ENCODE measurements at regions of chr2 and their contacts with region 1.

Region 1: GRCh38 chr2:223815186-223815883 is 22.0 kb downstream of the AP1S3 start:
- DNase-seq: peak; percentile 14
- ATAC-seq: peak; percentile 88
- H3K4me3 Mint-ChIP-seq: no peak overlapping the region
- H3K27ac Mint-ChIP-seq: peak overlapping the region; percentile 5
- H3K4me1 Mint-ChIP-seq: peaks cover 18% of the 10 kb centered on the region
- H3K27me3 Mint-ChIP-seq: no peaks in the 10 kb centered on the region

Region 2: DNA sequence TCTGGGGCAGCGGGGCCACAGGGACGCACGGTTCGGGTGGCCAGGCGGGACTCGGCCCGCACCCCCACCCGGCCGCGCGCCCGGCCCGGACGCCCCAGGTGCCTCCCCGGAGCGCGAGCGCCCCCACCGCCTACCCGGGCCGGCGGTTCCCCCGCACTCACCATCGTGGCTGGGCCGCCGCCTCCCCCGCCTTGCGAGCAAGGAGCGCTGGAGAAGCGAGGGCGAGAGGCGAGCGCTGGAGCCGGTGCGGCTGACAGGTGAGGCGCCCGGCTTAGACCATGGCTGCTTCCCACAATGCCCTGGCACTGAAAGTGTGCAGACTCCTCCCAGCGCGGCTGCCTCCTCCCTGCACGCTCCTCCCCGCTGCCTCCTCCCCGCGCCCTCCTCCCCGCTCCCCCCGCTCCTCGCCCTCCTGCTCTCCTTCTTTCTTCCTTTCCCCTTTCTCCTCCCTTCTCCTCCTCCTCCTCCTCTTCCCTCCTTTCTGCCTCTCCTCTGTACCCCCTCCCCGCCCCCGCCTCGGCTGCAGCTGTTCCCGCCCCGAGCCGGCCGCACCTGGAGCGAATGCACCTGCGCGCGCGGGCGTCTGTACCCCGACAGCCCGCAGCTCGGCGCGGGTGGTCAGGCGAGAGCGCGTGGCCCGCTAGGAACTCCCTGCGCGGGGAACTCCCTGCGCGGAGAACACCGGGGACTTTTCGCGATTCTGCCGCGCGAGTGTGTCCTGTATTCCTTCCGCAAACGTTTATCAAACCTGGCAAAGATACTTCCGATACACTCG is 22.1 kb after region 1 on chr2 and contains the start of gene AP1S3:
- CTCF ChIA-PET with region 1: interaction called, 3 read pairs
- POLR2A ChIA-PET with region 1: no interaction called
- intact Hi-C with region 1: loop called in 1 of 2 experiments (anchors 1 kb)
- DNase-seq: peak; percentile 88
- ATAC-seq: peak; percentile 98
- H3K4me3 Mint-ChIP-seq: peak within 1 kb of the TSS; percentile 86
- H3K27ac Mint-ChIP-seq: peak within 1 kb of the TSS; percentile 82
- H3K4me1 Mint-ChIP-seq: peaks cover 13% of the 10 kb centered on the region
- H3K27me3 Mint-ChIP-seq: no peaks in the 10 kb centered on the region
- total RNA-seq, gene AP1S3: 8.8 to 10.1 TPM

Region 3: DNA sequence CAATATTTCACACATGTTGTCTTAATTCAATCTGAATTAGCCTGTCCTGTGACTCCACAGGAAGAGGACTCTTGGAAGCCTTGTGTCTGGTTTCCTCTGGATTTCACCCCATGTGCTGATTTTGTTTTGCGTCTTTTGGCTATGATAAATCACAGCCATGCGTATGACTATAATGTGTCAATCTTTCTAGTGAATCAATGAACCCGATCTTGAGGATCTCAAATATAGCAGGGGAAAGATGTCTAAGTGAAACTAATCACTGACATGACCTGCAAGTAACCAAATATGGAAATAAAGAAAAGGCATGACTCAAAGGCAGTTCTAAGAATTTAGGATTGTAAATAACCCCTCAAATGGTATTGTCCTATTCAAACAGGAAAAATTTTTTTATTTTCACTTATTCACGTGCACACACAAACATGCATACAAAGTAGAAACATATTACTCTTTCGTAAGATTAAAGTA is 121.6 kb after region 1 on chr2:
- CTCF ChIA-PET with region 1: interaction called, 4 read pairs
- POLR2A ChIA-PET with region 1: no interaction called
- intact Hi-C with region 1: loop called in 1 of 2 experiments (anchors 2 kb)
- DNase-seq: no peak
- ATAC-seq: peak; percentile 39
- H3K4me3 Mint-ChIP-seq: peak overlapping the region; percentile 19
- H3K27ac Mint-ChIP-seq: peak overlapping the region; percentile 78
- H3K4me1 Mint-ChIP-seq: peaks cover 75% of the 10 kb centered on the region
- H3K27me3 Mint-ChIP-seq: no peaks in the 10 kb centered on the region

Region 4: GRCh38 chr2:223989273-223990232 is 174.2 kb after region 1 on chr2:
- CTCF ChIA-PET with region 1: no interaction called
- POLR2A ChIA-PET with region 1: no interaction called
- intact Hi-C with region 1: no loop called
- DNase-seq: no peak
- ATAC-seq: no peak
- H3K4me3 Mint-ChIP-seq: no peak overlapping the region
- H3K27ac Mint-ChIP-seq: no peak overlapping the region
- H3K4me1 Mint-ChIP-seq: peaks cover 6% of the 10 kb centered on the region
- H3K27me3 Mint-ChIP-seq: no peaks in the 10 kb centered on the region